Naive thymus-derived CD4-positive, alpha-beta T cell (primary cell): ENCODE measurements at regions of chr4 and their contacts with region 1.

Region 1: GRCh38 chr4:39697740-39698423 is at the start of gene UBE2K:
- DNase-seq: peak; percentile 82 to 97 (median 91)
- ATAC-seq: peak; percentile 93
- H3K4me3 ChIP-seq: peak within 1 kb of the TSS; percentile 94
- H3K4me3 Mint-ChIP-seq: peak within 1 kb of the TSS; percentile 95 to 100 (median 98)
- H3K27ac ChIP-seq: peak within 1 kb of the TSS; percentile 98
- H3K27ac Mint-ChIP-seq: peak within 1 kb of the TSS; percentile 96 to 99 (median 97)
- H3K4me1 ChIP-seq: peaks cover 17 to 22% of the 10 kb centered on the region in 2 donors
- H3K4me1 Mint-ChIP-seq: peaks cover 19 to 53% (median 37%) of the 10 kb centered on the region in 7 donors
- H3K27me3 ChIP-seq: no peaks in the 10 kb centered on the region
- H3K27me3 Mint-ChIP-seq: no peaks in the 10 kb centered on the region
- total RNA-seq, gene UBE2K: 31.1 to 85.0 (median 43.7) TPM

Region 2: DNA sequence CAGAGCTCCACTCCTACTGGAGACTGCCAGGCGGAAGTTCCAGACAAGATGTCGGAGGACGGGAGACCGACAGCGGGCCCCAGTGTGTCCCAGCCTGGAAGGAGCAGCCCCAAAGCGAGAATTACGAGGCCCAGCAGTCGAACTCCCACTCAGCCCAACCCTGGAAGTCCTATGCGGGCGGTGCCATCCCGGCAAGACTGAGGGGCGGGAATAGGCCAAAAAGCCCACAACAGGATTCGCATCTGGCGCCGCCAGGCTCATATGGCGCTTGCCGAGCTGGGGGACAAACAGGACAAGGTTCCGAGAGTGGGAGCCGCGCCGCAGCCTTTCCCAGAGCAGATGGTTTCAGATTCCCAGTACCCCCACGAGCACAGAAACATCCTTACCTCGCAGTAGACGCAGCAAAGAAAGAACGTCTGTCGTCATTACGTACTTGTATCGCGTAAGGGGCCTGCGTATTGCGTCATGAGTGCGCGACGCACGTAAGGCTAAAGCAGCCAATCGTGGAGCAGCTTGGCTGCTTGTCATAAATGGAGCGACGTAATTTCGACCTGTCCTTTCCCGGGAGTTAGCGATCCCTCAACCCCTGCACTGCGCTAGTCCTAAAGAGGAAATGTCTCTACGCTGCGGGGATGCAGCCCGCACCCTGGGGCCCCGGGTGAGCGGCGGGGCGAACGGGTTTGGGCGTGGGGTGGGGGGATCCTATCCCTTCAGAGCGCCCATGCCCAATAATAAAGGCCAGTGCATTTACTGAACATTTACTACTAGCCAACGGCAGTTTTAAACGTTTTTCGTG is 239.2 kb before region 1 on chr4 and contains the starts of genes LIAS and RPL9:
- CTCF ChIA-PET with region 1: no interaction called
- POLR2A ChIA-PET with region 1: interaction called, 7 read pairs
- intact Hi-C with region 1: loop called (anchors 1 to 2 kb)
- DNase-seq: peak; percentile 80 to 96 (median 92)
- ATAC-seq: peak; percentile 93
- H3K4me3 ChIP-seq: peak within 1 kb of the TSS; percentile 85
- H3K4me3 Mint-ChIP-seq: peak within 1 kb of the TSS; percentile 92 to 99 (median 96)
- H3K27ac ChIP-seq: peak within 1 kb of the TSS; percentile 95
- H3K27ac Mint-ChIP-seq: peak within 1 kb of the TSS; percentile 98 to 100 (median 99)
- H3K4me1 ChIP-seq: peaks cover 17 to 19% of the 10 kb centered on the region in 2 donors
- H3K4me1 Mint-ChIP-seq: peaks cover 8 to 60% (median 47%) of the 10 kb centered on the region in 7 donors
- H3K27me3 ChIP-seq: no peaks in the 10 kb centered on the region
- H3K27me3 Mint-ChIP-seq: peaks cover 0 to 2% (median 0%) of the 10 kb centered on the region in 5 donors
- total RNA-seq, gene LIAS: 14.5 to 27.8 (median 16.4) TPM
- total RNA-seq, gene RPL9: 1,414 to 3,398 (median 2,567) TPM

Region 3: DNA sequence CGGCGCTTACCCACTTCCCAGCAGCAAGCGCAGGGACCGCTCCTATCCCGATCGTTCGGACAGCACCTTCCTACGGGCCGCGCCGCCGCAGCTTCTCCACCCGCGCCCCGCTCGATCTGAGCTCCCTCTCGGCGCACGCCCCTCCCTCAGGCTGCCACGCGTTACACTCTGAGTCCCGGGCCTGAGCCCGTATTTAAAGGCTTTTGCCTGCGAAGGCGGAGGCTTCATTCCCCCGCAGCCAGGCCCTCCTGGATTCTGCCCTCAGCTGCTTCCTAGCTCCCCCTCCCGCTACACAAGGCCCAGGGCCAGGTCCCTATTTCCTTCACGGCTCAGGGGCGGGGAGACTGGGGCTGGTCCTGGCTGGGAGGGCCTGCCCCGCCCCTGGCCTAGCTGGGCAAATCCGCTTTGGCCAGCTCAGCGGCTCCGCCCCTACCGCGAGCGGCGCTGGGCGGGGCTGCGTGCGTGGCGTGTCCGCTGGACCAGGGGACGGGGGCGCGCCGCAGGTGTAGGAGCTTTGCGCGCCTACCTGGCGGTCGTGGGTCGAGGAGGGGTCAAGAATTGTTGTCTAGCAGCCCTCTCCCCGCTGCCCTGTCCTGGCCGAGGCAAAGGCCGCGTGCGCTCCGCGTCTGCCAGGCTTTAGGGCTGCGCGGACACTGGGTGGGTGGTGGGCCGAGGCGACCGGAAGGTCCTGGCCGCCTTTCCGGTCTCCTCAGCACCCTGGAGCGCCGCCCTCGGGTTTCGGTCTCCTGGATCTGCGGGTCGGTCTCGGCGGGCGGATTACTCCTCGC is 170.4 kb before region 1 on chr4 and contains the start of gene UGDH:
- CTCF ChIA-PET with region 1: no interaction called
- POLR2A ChIA-PET with region 1: interaction called, 8 read pairs
- intact Hi-C with region 1: loop called (anchors 2 to 5 kb)
- DNase-seq: peak; percentile 85 to 95 (median 88)
- ATAC-seq: peak; percentile 99
- H3K4me3 ChIP-seq: peak within 1 kb of the TSS; percentile 81
- H3K4me3 Mint-ChIP-seq: peak within 1 kb of the TSS; percentile 88 to 99 (median 98)
- H3K27ac ChIP-seq: peak within 1 kb of the TSS; percentile 74
- H3K27ac Mint-ChIP-seq: peak within 1 kb of the TSS; percentile 84 to 97 (median 93)
- H3K4me1 ChIP-seq: peaks cover 7 to 10% of the 10 kb centered on the region in 2 donors
- H3K4me1 Mint-ChIP-seq: peaks cover 11 to 26% (median 19%) of the 10 kb centered on the region in 7 donors
- H3K27me3 ChIP-seq: no peaks in the 10 kb centered on the region
- H3K27me3 Mint-ChIP-seq: no peaks in the 10 kb centered on the region
- total RNA-seq, gene UGDH: 6.9 to 20.9 (median 17.7) TPM

Region 4: DNA sequence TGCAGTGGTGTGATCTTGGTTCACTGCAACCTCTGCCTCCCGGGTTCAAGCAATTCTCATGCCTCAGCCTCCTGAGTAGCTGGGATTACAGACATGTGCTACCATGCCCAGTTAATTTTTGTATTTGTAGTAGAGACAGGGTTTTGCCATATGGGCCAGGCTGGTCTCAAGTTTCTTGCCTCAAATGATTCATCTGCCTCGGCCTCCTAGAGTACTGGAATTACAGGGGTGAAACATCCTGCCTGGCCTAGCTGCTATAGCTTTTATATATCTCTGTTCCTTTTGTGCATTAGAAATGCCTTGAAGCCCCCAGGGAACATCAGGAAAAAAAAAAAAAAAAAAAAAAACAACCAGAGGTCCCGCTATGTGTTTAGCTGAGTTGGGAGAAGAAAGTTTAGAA is 34.8 kb after region 1 on chr4:
- CTCF ChIA-PET with region 1: interaction called, 4 read pairs
- POLR2A ChIA-PET with region 1: no interaction called
- intact Hi-C with region 1: loop called in 1 of 2 experiments (anchors 5 kb)
- DNase-seq: no peak
- ATAC-seq: no peak
- H3K4me3 ChIP-seq: no peak overlapping the region
- H3K4me3 Mint-ChIP-seq: no peak overlapping the region
- H3K27ac ChIP-seq: no peak overlapping the region
- H3K27ac Mint-ChIP-seq: peak overlapping the region in 1 of 9 donors; percentile 82
- H3K4me1 ChIP-seq: peaks cover 0 to 5% of the 10 kb centered on the region in 2 donors
- H3K4me1 Mint-ChIP-seq: peaks cover 14 to 37% (median 17%) of the 10 kb centered on the region in 7 donors
- H3K27me3 ChIP-seq: no peaks in the 10 kb centered on the region
- H3K27me3 Mint-ChIP-seq: no peaks in the 10 kb centered on the region

Region 5: GRCh38 chr4:40121515-40121914 is 423.6 kb after region 1 on chr4:
- CTCF ChIA-PET with region 1: no interaction called
- POLR2A ChIA-PET with region 1: no interaction called
- intact Hi-C with region 1: loop called in 1 of 2 experiments (anchors 5 kb)
- DNase-seq: no peak
- ATAC-seq: peak; percentile 69
- H3K4me3 ChIP-seq: no peak overlapping the region
- H3K4me3 Mint-ChIP-seq: no peak overlapping the region
- H3K27ac ChIP-seq: peak overlapping the region; percentile 17
- H3K27ac Mint-ChIP-seq: peak overlapping the region; percentile 12 to 75 (median 67)
- H3K4me1 ChIP-seq: peaks cover 7 to 25% of the 10 kb centered on the region in 2 donors
- H3K4me1 Mint-ChIP-seq: peaks cover 3 to 71% (median 54%) of the 10 kb centered on the region in 7 donors
- H3K27me3 ChIP-seq: no peaks in the 10 kb centered on the region
- H3K27me3 Mint-ChIP-seq: no peaks in the 10 kb centered on the region

Region 6: DNA sequence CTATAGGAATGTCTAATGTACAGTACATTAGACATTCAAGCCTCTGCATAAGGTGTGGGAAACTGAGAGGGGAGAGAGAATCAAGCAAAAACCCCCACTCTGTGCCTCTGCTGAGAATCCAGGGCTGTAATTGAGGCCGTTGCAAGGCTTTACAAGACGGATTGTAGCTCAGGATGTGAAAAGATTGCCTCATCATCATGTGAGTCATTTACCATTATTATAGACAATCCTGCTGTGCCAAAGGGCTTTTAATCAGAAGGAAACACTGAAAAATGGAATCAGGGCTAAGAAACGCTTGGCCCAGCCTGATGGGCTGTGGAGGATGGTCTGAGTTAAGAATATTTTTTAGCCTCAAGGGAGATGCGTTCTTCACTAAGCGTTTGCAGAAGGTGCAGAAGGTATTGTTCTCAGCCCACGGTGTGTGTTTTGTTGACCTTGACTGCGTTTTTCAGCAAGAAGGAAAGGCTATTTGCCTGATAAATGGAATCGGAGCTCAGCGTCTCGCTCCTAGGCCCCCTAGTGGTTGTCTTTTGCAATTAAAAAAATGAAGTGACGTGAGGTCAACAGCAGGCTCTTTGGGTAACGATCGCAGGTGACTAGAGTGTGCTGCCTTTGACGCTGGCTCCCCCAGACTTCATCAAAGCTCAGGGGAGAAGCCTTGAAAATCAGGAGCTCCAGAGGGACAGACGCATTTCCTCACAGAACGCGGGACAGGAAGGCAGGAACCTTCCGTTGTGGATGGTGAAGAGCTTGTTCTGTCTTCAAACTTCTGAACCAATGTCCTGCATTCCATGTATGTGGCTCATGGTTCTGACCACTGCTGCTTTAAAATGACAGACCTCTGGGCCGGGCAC is 619.1 kb after region 1 on chr4:
- CTCF ChIA-PET with region 1: no interaction called
- POLR2A ChIA-PET with region 1: interaction called, 3 read pairs
- intact Hi-C with region 1: loop called in 1 of 2 experiments (anchors 5 kb)
- DNase-seq: peak; percentile 39 to 83 (median 76)
- ATAC-seq: peak; percentile 81
- H3K4me3 ChIP-seq: peak overlapping the region; percentile 75
- H3K4me3 Mint-ChIP-seq: peak overlapping the region; percentile 79 to 93 (median 86)
- H3K27ac ChIP-seq: peak overlapping the region; percentile 92
- H3K27ac Mint-ChIP-seq: peak overlapping the region; percentile 90 to 99 (median 99)
- H3K4me1 ChIP-seq: peaks cover 7 to 19% of the 10 kb centered on the region in 2 donors
- H3K4me1 Mint-ChIP-seq: peaks cover 23 to 71% (median 61%) of the 10 kb centered on the region in 7 donors
- H3K27me3 ChIP-seq: no peaks in the 10 kb centered on the region
- H3K27me3 Mint-ChIP-seq: no peaks in the 10 kb centered on the region

Region 7: DNA sequence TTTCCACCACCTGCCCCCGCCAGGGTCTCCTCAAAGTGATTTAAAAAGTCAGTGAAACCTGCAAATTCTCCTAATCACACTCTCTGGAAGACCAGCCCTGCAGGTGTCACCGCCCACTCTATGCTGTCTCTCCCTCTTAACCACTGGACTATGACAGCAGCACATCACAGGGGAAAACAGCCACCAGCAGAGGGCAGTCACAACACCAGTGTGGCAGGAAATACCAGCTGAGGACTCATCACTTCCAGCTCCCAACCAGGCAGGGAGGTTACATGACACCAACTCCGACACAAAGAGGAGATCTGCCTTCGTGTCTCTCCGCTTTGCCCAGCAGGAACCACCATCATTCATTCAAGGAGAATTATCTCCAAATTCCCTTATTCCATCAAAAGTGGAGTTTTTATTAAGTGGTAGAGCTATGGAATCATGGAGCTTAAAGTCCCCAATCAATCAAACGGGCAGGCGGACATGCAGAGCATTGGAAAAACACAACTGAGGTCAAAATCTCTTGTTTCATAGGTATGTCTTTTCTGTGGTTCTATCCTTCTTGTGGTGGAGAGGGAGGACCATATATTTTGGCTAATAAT is 1143.2 kb after region 1 on chr4:
- CTCF ChIA-PET with region 1: no interaction called
- POLR2A ChIA-PET with region 1: no interaction called
- intact Hi-C with region 1: loop called (anchors 5 to 10 kb)
- DNase-seq: peak; percentile 8 to 75 (median 40)
- ATAC-seq: peak; percentile 87
- H3K4me3 ChIP-seq: no peak overlapping the region
- H3K4me3 Mint-ChIP-seq: no peak overlapping the region
- H3K27ac ChIP-seq: no peak overlapping the region
- H3K27ac Mint-ChIP-seq: no peak overlapping the region
- H3K4me1 ChIP-seq: no peaks in the 10 kb centered on the region
- H3K4me1 Mint-ChIP-seq: peaks cover 0 to 5% (median 0%) of the 10 kb centered on the region in 7 donors
- H3K27me3 ChIP-seq: no peaks in the 10 kb centered on the region
- H3K27me3 Mint-ChIP-seq: peaks cover 0 to 8% (median 0%) of the 10 kb centered on the region in 5 donors